MCF 10A (cell line): ENCODE measurements at regions of chr6 and their contacts with region 1.

Region 1: DNA sequence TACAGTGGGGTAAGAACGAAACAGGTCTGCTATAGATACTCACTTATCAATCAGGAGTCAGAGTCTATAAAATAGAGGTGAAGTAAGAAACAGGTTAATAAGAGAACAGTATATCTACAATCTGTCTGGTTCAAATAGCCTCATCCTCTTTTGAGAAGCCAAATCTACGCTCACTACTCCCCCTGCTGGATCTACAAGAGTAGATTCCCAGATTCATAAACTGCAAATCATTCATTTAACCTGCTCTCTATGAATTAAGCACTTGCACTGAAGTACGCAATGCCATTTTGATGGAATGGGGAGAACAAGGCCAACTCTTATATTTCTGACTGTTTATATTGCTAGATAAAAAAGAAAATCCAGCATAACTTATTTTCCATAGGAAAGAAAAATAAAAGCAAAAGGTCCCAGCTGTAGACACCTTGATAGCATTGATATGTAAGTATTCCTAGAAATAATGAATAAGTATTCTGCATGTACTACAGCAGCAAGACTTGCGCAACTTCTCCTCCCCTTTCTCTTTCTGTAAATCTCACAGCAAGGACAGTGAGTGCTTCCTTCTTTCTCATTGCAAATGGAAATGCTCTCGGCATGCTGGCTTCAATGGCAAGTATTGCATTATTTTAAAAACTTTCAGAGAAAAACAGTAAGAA is 92.3 kb downstream of the RFX6 start:
- DNase-seq: peak; percentile 74
- H3K4me3 Mint-ChIP-seq: no peak overlapping the region
- H3K27ac Mint-ChIP-seq: no peak overlapping the region
- H3K4me1 Mint-ChIP-seq: no peaks in the 10 kb centered on the region
- H3K27me3 Mint-ChIP-seq: peaks cover 63% of the 10 kb centered on the region
- CTCF ChIP-seq: peak; percentile 59

Region 2: GRCh38 chr6:116779573-116780164 is 189.7 kb before region 1 on chr6:
- CTCF ChIA-PET with region 1: interaction called, 20 read pairs
- POLR2A ChIA-PET with region 1: no interaction called
- intact Hi-C with region 1: loop called (anchors 1 kb)
- DNase-seq: peak; percentile 49
- H3K4me3 Mint-ChIP-seq: no peak overlapping the region
- H3K27ac Mint-ChIP-seq: no peak overlapping the region
- H3K4me1 Mint-ChIP-seq: peaks cover 6% of the 10 kb centered on the region
- H3K27me3 Mint-ChIP-seq: no peaks in the 10 kb centered on the region
- CTCF ChIP-seq: peak; percentile 29

Region 3: DNA sequence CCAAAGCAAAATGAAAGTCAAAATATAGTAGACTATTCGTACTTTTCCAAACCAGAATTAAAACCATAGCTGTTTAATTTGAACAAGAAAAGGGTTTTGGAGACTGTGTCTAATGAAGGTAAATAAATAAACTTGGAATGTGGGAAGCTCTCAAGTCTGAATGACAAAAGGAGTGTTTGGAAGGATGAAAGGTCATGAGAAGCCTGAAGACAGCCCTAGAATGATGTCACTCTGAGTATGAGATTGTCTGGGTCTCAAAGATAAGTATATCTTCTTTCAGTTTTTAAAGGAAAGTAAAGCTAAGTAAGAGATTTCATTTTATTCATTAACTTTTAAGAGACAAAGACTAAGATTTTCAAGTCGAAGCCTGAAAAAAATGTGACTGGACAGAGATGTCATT is 19.4 kb before region 1 on chr6:
- CTCF ChIA-PET with region 1: interaction called, 12 read pairs
- POLR2A ChIA-PET with region 1: no interaction called
- intact Hi-C with region 1: no loop called
- DNase-seq: no peak
- H3K4me3 Mint-ChIP-seq: no peak overlapping the region
- H3K27ac Mint-ChIP-seq: no peak overlapping the region
- H3K4me1 Mint-ChIP-seq: peaks cover 6% of the 10 kb centered on the region
- H3K27me3 Mint-ChIP-seq: peaks cover 76% of the 10 kb centered on the region
- CTCF ChIP-seq: no peak

Region 4: DNA sequence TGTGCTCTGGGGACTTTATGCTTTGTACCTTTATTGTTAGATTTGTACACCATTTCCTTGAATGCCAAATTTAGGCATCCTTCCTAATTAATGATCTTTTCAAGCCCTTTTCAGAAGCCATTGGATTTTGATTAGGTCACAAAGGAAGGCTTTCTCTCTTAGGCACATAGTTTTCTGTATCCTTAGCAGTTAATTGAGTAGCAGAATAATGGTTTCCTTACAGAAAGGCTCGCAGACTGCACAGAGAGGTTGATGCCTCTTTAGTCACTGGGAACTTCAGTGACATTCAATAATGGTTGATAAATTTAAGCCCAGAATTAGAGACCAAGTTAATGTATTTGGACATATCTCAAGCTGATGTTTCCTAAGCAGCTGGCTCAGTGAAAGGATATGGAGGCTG is 156.9 kb after region 1 on chr6:
- CTCF ChIA-PET with region 1: no interaction called
- POLR2A ChIA-PET with region 1: no interaction called
- intact Hi-C with region 1: no loop called
- DNase-seq: no peak
- H3K4me3 Mint-ChIP-seq: no peak overlapping the region
- H3K27ac Mint-ChIP-seq: no peak overlapping the region
- H3K4me1 Mint-ChIP-seq: no peaks in the 10 kb centered on the region
- H3K27me3 Mint-ChIP-seq: no peaks in the 10 kb centered on the region
- CTCF ChIP-seq: no peak

Region 5: DNA sequence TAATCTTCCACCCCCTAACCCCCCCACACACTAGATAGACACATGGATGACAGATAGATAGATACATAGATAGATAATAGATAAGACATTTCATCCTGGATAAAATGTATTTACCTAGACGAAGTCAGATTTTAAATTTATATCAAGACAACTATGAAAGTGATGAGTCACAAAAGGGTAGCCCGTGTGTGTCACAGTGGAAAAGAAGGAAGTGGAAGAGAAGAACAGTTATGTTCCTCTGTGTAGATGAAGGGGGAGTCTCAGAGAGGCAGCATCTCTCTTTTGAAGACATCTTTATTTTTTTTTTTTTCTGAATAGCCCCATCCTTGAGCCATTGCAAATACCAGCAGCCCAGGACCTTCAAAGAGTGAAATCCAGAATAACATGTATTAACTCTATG is 174.3 kb after region 1 on chr6:
- CTCF ChIA-PET with region 1: no interaction called
- POLR2A ChIA-PET with region 1: no interaction called
- intact Hi-C with region 1: no loop called
- DNase-seq: no peak
- H3K4me3 Mint-ChIP-seq: no peak overlapping the region
- H3K27ac Mint-ChIP-seq: no peak overlapping the region
- H3K4me1 Mint-ChIP-seq: no peaks in the 10 kb centered on the region
- H3K27me3 Mint-ChIP-seq: no peaks in the 10 kb centered on the region
- CTCF ChIP-seq: no peak

Region 6: GRCh38 chr6:117188627-117189201 is 219.4 kb after region 1 on chr6:
- CTCF ChIA-PET with region 1: interaction called, 5 read pairs
- POLR2A ChIA-PET with region 1: no interaction called
- intact Hi-C with region 1: loop called (anchors 1 kb)
- DNase-seq: peak; percentile 49
- H3K4me3 Mint-ChIP-seq: no peak overlapping the region
- H3K27ac Mint-ChIP-seq: no peak overlapping the region
- H3K4me1 Mint-ChIP-seq: no peaks in the 10 kb centered on the region
- H3K27me3 Mint-ChIP-seq: no peaks in the 10 kb centered on the region
- CTCF ChIP-seq: peak; percentile 66

Region 7: GRCh38 chr6:117317261-117317660 is 347.9 kb after region 1 on chr6:
- CTCF ChIA-PET with region 1: interaction called, 11 read pairs
- POLR2A ChIA-PET with region 1: no interaction called
- intact Hi-C with region 1: loop called (anchors 2 kb)
- DNase-seq: peak; percentile 27
- H3K4me3 Mint-ChIP-seq: no peak overlapping the region
- H3K27ac Mint-ChIP-seq: no peak overlapping the region
- H3K4me1 Mint-ChIP-seq: no peaks in the 10 kb centered on the region
- H3K27me3 Mint-ChIP-seq: no peaks in the 10 kb centered on the region
- CTCF ChIP-seq: peak; percentile 23